ENCODE measurements at regions of chrX and their contacts with region 1.

Region 1: DNA sequence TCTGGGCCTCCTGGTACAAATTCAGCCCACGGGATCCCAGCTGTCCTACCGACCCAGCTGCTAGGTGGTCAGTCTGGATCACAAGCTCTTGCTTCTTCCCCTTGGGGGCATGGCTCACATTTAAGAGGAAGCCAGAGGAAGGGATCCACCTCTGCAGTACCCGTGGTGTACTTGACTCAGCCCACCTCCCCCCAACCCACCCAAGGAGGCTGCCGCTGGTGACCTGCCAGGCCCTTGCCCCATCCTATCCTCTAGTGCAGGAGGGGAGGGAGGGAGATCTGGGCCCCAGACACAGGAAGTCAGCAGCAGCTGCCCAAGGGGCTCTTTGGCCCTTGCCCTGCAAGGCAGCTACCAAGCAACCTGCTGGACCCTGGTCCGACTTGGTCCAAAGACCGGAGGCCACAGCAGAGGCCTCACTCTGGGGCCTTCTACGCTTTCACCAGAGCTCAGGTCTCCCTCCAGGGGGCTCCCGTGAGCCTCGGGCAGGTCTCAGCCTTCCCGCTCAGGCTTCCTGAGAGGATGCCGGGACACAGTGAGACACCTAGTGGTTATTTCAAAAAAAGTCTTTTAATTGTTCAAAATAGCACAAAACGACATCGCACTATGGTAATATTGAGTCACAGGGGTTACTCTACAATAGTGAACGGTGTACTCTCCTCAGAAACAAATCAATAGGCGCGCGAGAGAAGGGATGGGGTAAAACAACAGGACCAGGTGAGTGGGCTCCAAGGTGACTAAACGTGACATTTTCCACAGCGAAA is 2.7 kb upstream of the RENBP start:
- DNase-seq: peak; percentile 79
- H3K4me3 ChIP-seq: no peak overlapping the region
- H3K27ac ChIP-seq: peak overlapping the region; percentile 38
- H3K4me1 ChIP-seq: peaks cover 31% of the 10 kb centered on the region
- H3K27me3 ChIP-seq: no peaks in the 10 kb centered on the region
- CTCF ChIP-seq: peak; percentile 81 to 85
- POLR2A ChIP-seq: no peak

Region 2: GRCh38 chrX:153794018-153794896 is 152.9 kb before region 1 on chrX and contains the starts of genes IDH3G and SSR4:
- CTCF ChIA-PET with region 1: interaction called, 13 read pairs
- POLR2A ChIA-PET with region 1: no interaction called
- dilution Hi-C with region 1: no loop called
- intact Hi-C with region 1: no loop called
- DNase-seq: peak; percentile 96
- H3K4me3 ChIP-seq: peak within 1 kb of the TSS; percentile 39 to 84 (median 78)
- H3K27ac ChIP-seq: peak within 1 kb of the TSS; percentile 87
- H3K4me1 ChIP-seq: peaks cover 15% of the 10 kb centered on the region
- H3K27me3 ChIP-seq: no peaks in the 10 kb centered on the region
- CTCF ChIP-seq: no peak
- POLR2A ChIP-seq: peak; percentile 76
- total RNA-seq, gene IDH3G: 57.7 and 60.7 TPM in 2 replicates
- total RNA-seq, gene SSR4: 235 and 242 TPM in 2 replicates

Region 3: DNA sequence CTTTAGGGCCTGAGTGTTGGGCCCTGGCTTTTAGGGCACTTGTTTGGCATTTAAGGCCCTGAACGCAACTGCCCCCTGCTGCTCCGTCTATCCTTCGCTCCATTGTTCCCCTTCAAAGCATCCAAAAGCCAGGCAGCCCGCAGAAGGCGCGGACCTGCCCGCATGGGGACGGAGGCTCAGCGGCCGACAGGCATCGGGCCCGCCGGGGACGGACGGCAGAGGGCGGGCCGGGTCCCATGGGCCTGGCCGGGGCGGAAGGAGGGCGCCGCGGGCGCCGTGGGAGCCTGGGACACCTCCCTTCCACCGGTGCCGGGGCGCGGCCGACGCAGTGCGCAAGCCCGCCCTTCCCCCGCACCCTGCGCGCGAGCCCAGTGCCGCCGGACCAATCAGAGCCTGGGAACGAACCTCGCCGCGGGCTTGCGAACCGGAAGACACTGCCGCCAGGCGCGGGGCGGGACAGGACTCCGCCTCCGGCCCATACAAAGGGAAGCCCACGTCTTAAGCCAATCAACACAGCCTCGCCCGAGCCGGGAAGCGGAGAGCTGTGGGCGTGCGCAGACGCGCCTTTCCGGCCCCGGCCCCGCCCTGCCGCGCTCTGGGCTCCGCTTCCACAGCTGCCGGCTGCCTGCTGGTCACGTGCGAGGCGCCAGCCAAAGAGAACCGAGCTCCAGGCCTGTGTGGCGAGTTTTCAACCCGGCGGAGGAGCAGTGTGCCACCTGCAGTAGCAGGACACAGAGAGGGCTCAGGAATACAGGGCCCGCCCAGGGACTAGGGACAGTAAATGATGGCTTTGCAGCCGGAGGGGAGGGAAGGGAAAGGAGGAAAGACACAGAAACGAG is 19.0 kb before region 1 on chrX:
- CTCF ChIA-PET with region 1: interaction called, 253 read pairs
- POLR2A ChIA-PET with region 1: interaction called, 5 read pairs
- dilution Hi-C with region 1: no loop called
- intact Hi-C with region 1: loop called (anchors 1 kb)
- DNase-seq: peak; percentile 98
- H3K4me3 ChIP-seq: peak overlapping the region in 2 of 3 experiments; percentile 44 to 49
- H3K27ac ChIP-seq: peak overlapping the region; percentile 100
- H3K4me1 ChIP-seq: peaks cover 44% of the 10 kb centered on the region
- H3K27me3 ChIP-seq: no peaks in the 10 kb centered on the region
- CTCF ChIP-seq: no peak
- POLR2A ChIP-seq: no peak

Region 4: GRCh38 chrX:153934473-153935325 is 12.5 kb before region 1 on chrX and contains the start of gene NAA10:
- CTCF ChIA-PET with region 1: interaction called, 30 read pairs
- POLR2A ChIA-PET with region 1: interaction called, 6 read pairs
- dilution Hi-C with region 1: no loop called
- intact Hi-C with region 1: no loop called
- DNase-seq: peak; percentile 62
- H3K4me3 ChIP-seq: peak within 1 kb of the TSS; percentile 33 to 57 (median 39)
- H3K27ac ChIP-seq: peak within 1 kb of the TSS; percentile 44
- H3K4me1 ChIP-seq: peaks cover 4% of the 10 kb centered on the region
- H3K27me3 ChIP-seq: no peaks in the 10 kb centered on the region
- CTCF ChIP-seq: no peak
- POLR2A ChIP-seq: no peak
- total RNA-seq, gene NAA10: 143 and 144 TPM in 2 replicates

Region 5: GRCh38 chrX:154873329-154873728 is 926.1 kb after region 1 on chrX:
- CTCF ChIA-PET with region 1: no interaction called
- POLR2A ChIA-PET with region 1: no interaction called
- dilution Hi-C with region 1: no loop called
- intact Hi-C with region 1: no loop called
- DNase-seq: no peak
- H3K4me3 ChIP-seq: no peak overlapping the region
- H3K27ac ChIP-seq: no peak overlapping the region
- H3K4me1 ChIP-seq: no peaks in the 10 kb centered on the region
- H3K27me3 ChIP-seq: no peaks in the 10 kb centered on the region
- CTCF ChIP-seq: no peak
- POLR2A ChIP-seq: no peak